ENCODE measurements at regions of chr2 and their contacts with region 1.

Region 1: GRCh38 chr2:163191372-163191771 is 352.8 kb upstream of the KCNH7 start:
- DNase-seq: peak in 2 of 10 donors; percentile 8 to 28

Region 2: GRCh38 chr2:164430166-164430783 is 1238.9 kb after region 1 on chr2:
- intact Hi-C with region 1: loop called (anchors 5 kb)
- DNase-seq: peak in 4 of 10 donors; percentile 15 to 32 (median 24)